ENCODE measurements at regions of chr3 and their contacts with region 1.

Region 1: GRCh38 chr3:188914552-188914951 is 257.2 kb upstream of the TPRG1 start:
- DNase-seq: no peak
- H3K4me3 Mint-ChIP-seq: peak overlapping the region; percentile 23
- H3K27ac Mint-ChIP-seq: peak overlapping the region; percentile 87
- H3K4me1 Mint-ChIP-seq: peaks cover 37% of the 10 kb centered on the region
- H3K27me3 Mint-ChIP-seq: no peaks in the 10 kb centered on the region

Region 2: DNA sequence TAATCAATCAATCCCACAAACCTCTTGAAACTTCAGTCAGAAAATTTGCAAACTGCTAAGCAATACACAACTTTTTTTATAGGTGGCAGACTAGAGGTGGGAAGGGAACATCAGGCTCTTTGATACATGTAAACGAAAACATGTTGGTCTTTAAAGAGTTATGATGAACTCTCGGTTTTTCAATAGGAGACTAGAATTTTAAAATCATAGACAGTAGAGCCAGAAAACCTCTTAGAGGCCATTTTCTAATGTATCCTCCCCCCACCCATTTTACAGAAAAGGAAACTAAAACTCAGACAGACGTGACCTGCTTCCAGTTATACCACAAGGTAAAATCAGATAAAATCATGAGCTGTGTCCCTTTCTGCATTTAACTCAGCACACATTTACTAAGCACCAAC is 939.7 kb before region 1 on chr3:
- intact Hi-C with region 1: loop called (anchors 5 kb)
- DNase-seq: peak; percentile 73
- H3K4me3 Mint-ChIP-seq: peak overlapping the region; percentile 73
- H3K27ac Mint-ChIP-seq: peak overlapping the region; percentile 94
- H3K4me1 Mint-ChIP-seq: peaks cover 63% of the 10 kb centered on the region
- H3K27me3 Mint-ChIP-seq: no peaks in the 10 kb centered on the region

Region 3: DNA sequence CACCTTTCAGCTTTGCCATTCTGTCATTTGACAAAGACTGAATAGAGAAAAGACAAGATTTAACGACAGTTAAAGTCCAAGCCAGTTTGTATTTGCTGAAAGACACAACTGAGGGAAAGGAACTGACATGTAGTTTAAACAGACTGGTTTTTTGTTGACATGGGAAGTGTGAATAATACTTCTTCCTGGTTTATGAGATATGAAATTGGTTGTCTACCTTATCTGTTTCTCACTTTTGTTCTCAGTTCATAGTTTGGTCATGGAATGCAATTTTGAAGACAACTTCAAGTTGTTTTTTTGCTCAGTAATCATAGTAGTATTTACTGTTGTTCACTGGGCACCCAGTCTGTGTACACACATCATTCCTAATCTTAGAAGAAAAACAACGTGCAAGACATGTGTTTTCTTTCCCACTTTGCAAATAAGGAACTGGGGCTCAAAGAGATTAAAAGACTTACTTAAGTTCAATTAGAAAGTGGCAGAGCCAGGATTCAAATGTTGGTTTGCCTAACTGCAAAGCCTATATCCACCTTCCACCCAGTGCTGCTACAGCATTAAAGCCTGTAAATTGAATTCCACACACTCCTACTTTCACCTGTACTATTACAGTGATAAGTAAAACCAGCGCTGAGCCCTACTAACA is 657.0 kb before region 1 on chr3:
- intact Hi-C with region 1: loop called (anchors 1 kb)
- DNase-seq: no peak
- H3K4me3 Mint-ChIP-seq: no peak overlapping the region
- H3K27ac Mint-ChIP-seq: peak overlapping the region; percentile 85
- H3K4me1 Mint-ChIP-seq: peaks cover 47% of the 10 kb centered on the region
- H3K27me3 Mint-ChIP-seq: no peaks in the 10 kb centered on the region

Region 4: DNA sequence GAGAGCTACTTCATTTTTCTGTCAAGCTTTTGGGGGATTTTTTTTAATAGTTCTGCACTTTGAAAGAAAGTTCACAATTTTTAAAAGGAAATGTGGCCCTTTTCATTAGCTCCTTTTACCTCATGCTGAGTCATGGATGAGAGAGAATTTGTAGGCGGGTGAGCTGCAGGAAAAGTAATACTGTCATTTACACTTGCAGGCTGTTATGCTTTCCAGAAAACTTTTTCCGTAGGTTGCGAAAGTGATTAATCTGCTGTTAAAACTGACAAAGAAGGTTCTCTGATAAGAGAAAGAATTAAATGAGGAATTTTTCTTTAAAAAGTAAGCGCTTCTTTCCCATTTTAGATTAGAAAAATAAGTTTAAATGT is 330.4 kb before region 1 on chr3:
- intact Hi-C with region 1: loop called (anchors 1 kb)
- DNase-seq: no peak
- H3K4me3 Mint-ChIP-seq: no peak overlapping the region
- H3K27ac Mint-ChIP-seq: no peak overlapping the region
- H3K4me1 Mint-ChIP-seq: peaks cover 14% of the 10 kb centered on the region
- H3K27me3 Mint-ChIP-seq: no peaks in the 10 kb centered on the region

Region 5: DNA sequence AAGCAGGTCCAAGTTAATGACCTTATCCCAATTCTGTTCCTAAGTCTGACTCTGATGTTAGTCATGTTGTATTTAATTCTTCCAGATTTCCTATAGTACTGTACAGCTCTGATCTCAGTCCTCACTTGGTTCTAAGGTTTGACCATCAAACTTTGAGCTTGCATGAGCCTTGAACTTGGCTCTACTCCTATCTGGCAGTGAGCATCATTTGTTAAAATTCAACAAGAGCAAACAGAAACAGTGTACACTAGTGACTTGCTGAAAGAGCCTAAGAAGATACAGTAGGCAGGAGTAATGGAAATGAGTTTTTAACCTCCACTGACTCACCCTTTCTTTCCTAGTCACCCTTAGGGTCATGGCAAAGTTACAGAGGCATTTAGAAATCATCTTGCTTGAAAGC is 193.9 kb before region 1 on chr3:
- intact Hi-C with region 1: loop called (anchors 1 kb)
- DNase-seq: no peak
- H3K4me3 Mint-ChIP-seq: no peak overlapping the region
- H3K27ac Mint-ChIP-seq: no peak overlapping the region
- H3K4me1 Mint-ChIP-seq: peaks cover 13% of the 10 kb centered on the region
- H3K27me3 Mint-ChIP-seq: peaks cover 4% of the 10 kb centered on the region

Region 6: GRCh38 chr3:188947401-188948280 is 33.1 kb after region 1 on chr3:
- intact Hi-C with region 1: loop called (anchors 1 kb)
- DNase-seq: peak; percentile 63
- H3K4me3 Mint-ChIP-seq: peak overlapping the region; percentile 36
- H3K27ac Mint-ChIP-seq: no peak overlapping the region
- H3K4me1 Mint-ChIP-seq: peaks cover 28% of the 10 kb centered on the region
- H3K27me3 Mint-ChIP-seq: peaks cover 18% of the 10 kb centered on the region

Region 7: GRCh38 chr3:188962253-188963247 is 48.0 kb after region 1 on chr3:
- intact Hi-C with region 1: no loop called
- DNase-seq: no peak
- H3K4me3 Mint-ChIP-seq: no peak overlapping the region
- H3K27ac Mint-ChIP-seq: no peak overlapping the region
- H3K4me1 Mint-ChIP-seq: peaks cover 12% of the 10 kb centered on the region
- H3K27me3 Mint-ChIP-seq: peaks cover 40% of the 10 kb centered on the region

Region 8: DNA sequence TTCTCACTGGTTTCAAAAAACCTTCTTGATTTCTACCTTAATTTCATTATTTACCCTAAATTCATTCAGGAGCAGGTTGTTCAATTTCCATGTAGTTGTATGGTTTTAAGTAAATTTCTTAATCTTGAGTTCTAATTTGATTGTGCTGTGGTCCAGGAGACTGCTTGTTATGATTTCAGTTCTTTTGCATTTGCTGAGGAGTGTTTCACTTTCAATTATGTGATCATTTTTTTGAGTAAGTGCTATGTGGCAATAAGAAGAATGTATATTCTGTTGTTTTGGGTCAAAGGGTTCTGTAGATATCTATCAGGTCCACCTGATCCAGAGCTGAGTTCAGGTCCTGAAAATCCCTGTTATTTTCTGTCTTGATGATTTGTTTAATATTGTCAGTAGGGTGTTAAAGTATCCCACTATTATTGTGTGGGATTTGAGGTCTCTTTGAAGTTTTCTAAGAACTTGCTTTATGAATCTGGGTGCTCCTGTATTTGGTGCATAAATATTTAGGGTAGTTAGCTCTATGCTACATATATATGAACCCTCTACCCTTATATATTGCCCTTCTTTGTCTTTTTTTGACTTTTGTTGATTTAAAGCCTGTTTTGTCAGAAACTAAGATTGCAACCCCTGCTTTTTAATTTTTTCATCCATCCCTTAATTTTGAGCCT is 98.8 kb after region 1 on chr3:
- intact Hi-C with region 1: no loop called
- DNase-seq: no peak
- H3K4me3 Mint-ChIP-seq: no peak overlapping the region
- H3K27ac Mint-ChIP-seq: peak overlapping the region; percentile 25
- H3K4me1 Mint-ChIP-seq: peaks cover 21% of the 10 kb centered on the region
- H3K27me3 Mint-ChIP-seq: peaks cover 15% of the 10 kb centered on the region

Region 9: DNA sequence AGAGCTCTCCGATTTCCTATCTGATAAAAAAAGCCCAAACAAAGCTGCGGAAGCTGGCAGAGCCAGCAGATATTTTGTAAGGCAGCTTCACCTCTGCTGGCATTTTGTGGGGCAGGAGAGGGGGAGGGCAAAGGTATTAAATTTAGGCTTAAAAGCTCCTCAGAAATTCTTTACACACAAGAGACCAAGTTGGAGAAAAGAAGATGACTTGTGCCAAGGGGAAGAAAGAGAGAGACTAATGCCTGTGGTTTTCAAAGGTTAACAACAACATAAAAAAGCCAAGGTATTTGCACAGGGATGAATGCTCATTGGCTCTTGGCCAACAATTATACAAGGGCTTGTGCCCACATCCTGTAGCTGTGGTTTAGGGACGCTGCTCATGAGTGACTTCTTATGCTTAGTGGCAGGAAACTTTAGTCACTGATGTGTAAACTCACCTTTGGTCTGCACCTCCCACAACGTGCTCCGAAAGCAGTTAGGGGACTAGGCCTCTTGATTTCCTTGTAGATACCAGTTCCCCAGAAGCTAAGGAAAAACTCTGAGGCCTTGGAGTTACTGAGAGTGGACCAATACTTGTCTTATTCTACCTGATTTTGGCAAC is 410.1 kb after region 1 on chr3:
- intact Hi-C with region 1: loop called (anchors 10 kb)
- DNase-seq: peak; percentile 96
- H3K4me3 Mint-ChIP-seq: peak overlapping the region; percentile 84
- H3K27ac Mint-ChIP-seq: peak overlapping the region; percentile 99
- H3K4me1 Mint-ChIP-seq: peaks cover 58% of the 10 kb centered on the region
- H3K27me3 Mint-ChIP-seq: peaks cover 3% of the 10 kb centered on the region

Measured in activated CD4-positive, alpha-beta T cell treated with anti-CD3 and anti-CD28 coated beads, Interleukin-2, amount 10 ng/mL, durations not matched to agents 24 days and 14 days (primary cell).